Lower leg skin (tissue), 4 donors: ENCODE measurements at regions of chr2 and their contacts with region 1.

Region 1: DNA sequence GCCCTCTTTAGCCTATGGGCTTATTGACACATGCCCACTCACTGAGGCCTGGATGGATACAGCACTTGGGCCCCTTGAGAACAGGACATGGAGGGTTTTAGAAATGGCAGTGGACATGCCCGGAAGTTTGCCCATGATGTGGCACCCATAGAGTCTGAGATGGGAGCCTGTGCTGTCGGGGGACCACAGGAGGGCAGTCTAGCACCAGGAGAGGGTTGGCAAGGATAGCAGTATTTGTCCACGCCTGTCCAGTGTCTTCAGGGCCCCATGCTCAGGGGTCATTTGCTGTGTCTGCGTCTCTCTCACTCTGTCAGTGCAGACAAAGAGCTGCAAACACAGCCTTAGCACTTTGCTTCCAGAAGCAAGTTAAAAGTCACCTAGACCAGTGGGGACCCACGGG is 48.7 kb downstream of the IL1RL2 start:
- DNase-seq: no peak
- H3K4me3 ChIP-seq: no peak overlapping the region
- CTCF ChIP-seq: no peak
- POLR2A ChIP-seq: no peak

Region 2: GRCh38 chr2:101831351-101831865 is 404.1 kb before region 1 on chr2:
- intact Hi-C with region 1: no loop called
- DNase-seq: peak; percentile 71 to 93
- H3K4me3 ChIP-seq: no peak overlapping the region
- CTCF ChIP-seq: peak in 1 of 3 donors; percentile 36
- POLR2A ChIP-seq: no peak

Region 3: GRCh38 chr2:102020596-102021181 is 214.8 kb before region 1 on chr2:
- intact Hi-C with region 1: loop called (anchors 5 kb)
- DNase-seq: peak; percentile 93 to 98
- H3K4me3 ChIP-seq: no peak overlapping the region
- CTCF ChIP-seq: peak in 2 of 3 donors; percentile 74 to 97
- POLR2A ChIP-seq: no peak

Region 4: GRCh38 chr2:102187496-102188150 is 47.9 kb before region 1 on chr2:
- intact Hi-C with region 1: loop called (anchors 10 kb)
- DNase-seq: peak; percentile 55 to 93
- H3K4me3 ChIP-seq: peak overlapping the region; percentile 13
- CTCF ChIP-seq: no peak
- POLR2A ChIP-seq: no peak

Region 5: GRCh38 chr2:103174711-103175110 is 939.2 kb after region 1 on chr2:
- intact Hi-C with region 1: no loop called
- DNase-seq: no peak
- H3K4me3 ChIP-seq: no peak overlapping the region
- CTCF ChIP-seq: no peak
- POLR2A ChIP-seq: no peak